Activated T-helper 2 cell treated with anti-CD3 and anti-CD28 coated beads, Interferon-gamma antibody, Interleukin-2, Interleukin-4, amounts not matched to agents 10 μg/mL and 5 μg/mL and 100 μg/mL, durations not matched to agents 14 hours and 24 hours and 36 hours (primary cell): ENCODE measurements at regions of chr3 and their contacts with region 1.

Region 1: DNA sequence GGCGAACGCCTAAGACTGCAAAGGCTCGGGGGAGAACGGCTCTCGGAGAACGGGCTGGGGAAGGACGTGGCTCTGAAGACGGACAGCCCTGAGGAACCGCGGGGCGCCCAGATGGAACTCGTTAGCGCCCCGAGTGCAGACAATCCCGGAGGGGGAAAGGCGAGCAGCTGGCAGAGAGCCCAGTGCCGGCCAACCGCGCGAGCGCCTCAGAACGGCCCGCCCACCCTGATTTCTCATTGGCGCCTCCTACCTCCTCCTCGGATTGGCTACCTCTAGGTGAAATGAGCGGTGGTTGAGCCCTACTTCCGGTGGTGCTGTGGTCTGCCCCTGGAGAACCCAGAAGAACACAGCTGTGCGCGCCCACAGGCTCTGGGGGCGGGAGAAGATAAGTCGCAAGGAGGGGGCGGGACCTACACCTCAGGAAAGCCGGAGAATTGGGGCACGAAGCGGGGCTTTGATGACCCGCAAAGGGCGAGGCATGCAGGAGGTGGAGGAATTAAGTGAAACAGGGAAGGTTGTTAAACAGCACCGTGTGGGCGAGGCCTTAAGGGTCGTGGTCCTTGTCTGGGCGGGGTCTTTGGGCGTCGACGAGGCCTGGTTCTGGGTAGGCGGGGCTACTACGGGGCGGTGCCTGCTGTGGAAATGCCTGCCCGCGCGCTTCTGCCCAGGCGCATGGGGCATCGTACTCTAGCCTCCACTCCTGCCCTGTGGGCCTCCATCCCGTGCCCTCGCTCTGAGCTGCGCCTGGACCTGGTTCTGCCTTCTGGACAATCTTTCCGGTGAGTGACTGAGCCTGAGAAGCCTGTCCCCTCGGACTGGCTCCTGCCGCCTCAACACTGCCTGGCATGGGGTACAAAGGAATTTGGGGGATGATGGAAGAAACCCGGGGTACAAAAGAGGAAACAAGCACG is at the start of gene OGG1:
- DNase-seq: peak; percentile 97
- H3K4me3 Mint-ChIP-seq: peak within 1 kb of the TSS; percentile 95
- H3K27ac Mint-ChIP-seq: peak within 1 kb of the TSS; percentile 94
- H3K4me1 Mint-ChIP-seq: peaks cover 28% of the 10 kb centered on the region
- H3K27me3 Mint-ChIP-seq: no peaks in the 10 kb centered on the region
- total RNA-seq, gene OGG1: 33.0 and 38.4 TPM in 2 replicates

Region 2: GRCh38 chr3:9736831-9737230 is 13.1 kb before region 1 on chr3:
- intact Hi-C with region 1: no loop called
- DNase-seq: no peak
- H3K4me3 Mint-ChIP-seq: no peak overlapping the region
- H3K27ac Mint-ChIP-seq: peak overlapping the region; percentile 10
- H3K4me1 Mint-ChIP-seq: peaks cover 35% of the 10 kb centered on the region
- H3K27me3 Mint-ChIP-seq: no peaks in the 10 kb centered on the region

Region 3: GRCh38 chr3:9769426-9770275 is 19.8 kb after region 1 on chr3 and contains the start of gene CAMK1:
- intact Hi-C with region 1: loop called (anchors 2 kb)
- DNase-seq: peak; percentile 70
- H3K4me3 Mint-ChIP-seq: peak within 1 kb of the TSS; percentile 82
- H3K27ac Mint-ChIP-seq: peak within 1 kb of the TSS; percentile 65
- H3K4me1 Mint-ChIP-seq: peaks cover 36% of the 10 kb centered on the region
- H3K27me3 Mint-ChIP-seq: no peaks in the 10 kb centered on the region
- total RNA-seq, gene CAMK1: 113 and 116 TPM in 2 replicates

Region 4: GRCh38 chr3:9779721-9780457 is 30.0 kb after region 1 on chr3:
- intact Hi-C with region 1: loop called (anchors 2 kb)
- DNase-seq: peak; percentile 28
- H3K4me3 Mint-ChIP-seq: peak overlapping the region; percentile 62
- H3K27ac Mint-ChIP-seq: peak overlapping the region; percentile 98
- H3K4me1 Mint-ChIP-seq: peaks cover 58% of the 10 kb centered on the region
- H3K27me3 Mint-ChIP-seq: no peaks in the 10 kb centered on the region

Region 5: DNA sequence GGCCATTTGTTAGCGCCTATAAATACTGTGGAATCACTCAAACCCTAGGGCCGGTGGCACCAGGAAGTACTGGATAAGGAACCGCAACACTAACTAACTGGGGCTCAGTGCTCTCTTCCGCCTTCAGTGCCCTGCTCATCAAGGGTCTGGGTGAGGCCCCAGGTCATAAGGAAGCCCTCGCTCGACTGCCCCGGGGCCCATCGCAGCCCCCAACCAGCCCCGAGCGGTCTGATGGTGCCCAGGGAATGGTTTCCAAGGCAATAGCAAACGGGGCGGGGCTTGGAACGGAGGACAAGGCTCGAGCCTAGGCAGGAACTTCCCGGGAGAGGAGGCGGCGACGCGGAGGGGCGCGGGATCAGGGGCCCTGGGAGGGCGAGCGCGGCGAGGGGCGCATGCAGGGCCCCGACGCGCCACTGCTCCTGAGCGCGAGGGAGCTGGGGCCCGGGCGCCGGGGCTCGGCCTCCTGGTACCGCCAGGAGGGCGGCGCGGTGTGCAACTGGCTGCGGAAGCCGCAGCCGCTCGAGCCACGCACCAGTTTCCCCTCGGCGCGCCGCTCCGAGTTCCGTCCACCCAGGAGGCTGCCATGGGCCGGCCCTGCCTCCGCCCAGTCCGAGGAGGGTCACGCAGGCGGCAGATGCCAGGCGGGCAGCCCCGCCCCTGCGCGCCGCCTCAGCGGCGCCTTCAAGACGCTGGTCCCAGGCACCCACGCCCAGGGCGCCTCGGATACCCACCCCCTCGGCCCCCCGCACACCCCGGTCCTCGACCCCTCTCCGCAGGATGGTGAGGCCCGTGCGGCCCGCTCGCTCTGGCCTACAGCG is 59.9 kb after region 1 on chr3 and contains the start of gene TTLL3:
- intact Hi-C with region 1: loop called (anchors 5 kb)
- DNase-seq: peak; percentile 26
- H3K4me3 Mint-ChIP-seq: peak within 1 kb of the TSS; percentile 81
- H3K27ac Mint-ChIP-seq: peak within 1 kb of the TSS; percentile 85
- H3K4me1 Mint-ChIP-seq: peaks cover 32% of the 10 kb centered on the region
- H3K27me3 Mint-ChIP-seq: no peaks in the 10 kb centered on the region
- total RNA-seq, gene TTLL3: 51.0 and 56.5 TPM in 2 replicates